ENCODE measurements at regions of chr12 and their contacts with region 1.

Region 1: GRCh38 chr12:31274520-31275300 is 51.2 kb downstream of the SINHCAF start:
- DNase-seq: no peak
- H3K4me3 ChIP-seq: no peak overlapping the region
- H3K27ac ChIP-seq: no peak overlapping the region
- H3K4me1 ChIP-seq: peaks cover 0 to 20% (median 10%) of the 10 kb centered on the region in 4 donors
- H3K27me3 ChIP-seq: no peaks in the 10 kb centered on the region
- CTCF ChIP-seq: no peak
- EP300 ChIP-seq: no peak
- POLR2A ChIP-seq: no peak

Region 2: DNA sequence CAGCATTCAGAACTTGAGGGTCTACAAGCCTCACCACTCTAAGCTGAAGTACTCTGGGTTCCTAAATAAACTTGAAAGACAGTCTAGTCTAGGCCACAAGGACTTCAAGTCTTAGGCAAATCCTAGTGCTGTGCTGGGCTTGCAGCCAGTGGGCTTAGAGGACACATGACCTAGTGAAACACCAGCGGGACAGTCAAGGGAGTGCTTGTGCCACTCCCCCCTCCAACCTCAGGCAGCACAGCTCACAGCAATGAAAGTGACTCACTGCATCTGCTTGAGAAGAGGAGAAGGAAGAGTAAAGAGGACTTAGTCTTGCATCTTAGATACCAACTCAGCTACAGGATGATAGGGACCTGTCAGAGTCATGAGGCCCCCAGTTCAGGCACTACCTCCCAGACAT is 1017.1 kb before region 1 on chr12:
- intact Hi-C with region 1: no loop called
- DNase-seq: no peak
- H3K4me3 ChIP-seq: no peak overlapping the region
- H3K27ac ChIP-seq: no peak overlapping the region
- H3K4me1 ChIP-seq: no peaks in the 10 kb centered on the region
- H3K27me3 ChIP-seq: no peaks in the 10 kb centered on the region
- CTCF ChIP-seq: no peak
- EP300 ChIP-seq: no peak
- POLR2A ChIP-seq: no peak

Region 3: GRCh38 chr12:30847259-30847658 is 427.5 kb before region 1 on chr12:
- intact Hi-C with region 1: loop called (anchors 2 kb)
- DNase-seq: no peak
- H3K4me3 ChIP-seq: no peak overlapping the region
- H3K27ac ChIP-seq: no peak overlapping the region
- H3K4me1 ChIP-seq: no peaks in the 10 kb centered on the region
- H3K27me3 ChIP-seq: no peaks in the 10 kb centered on the region
- CTCF ChIP-seq: peak in 3 of 4 experiments; percentile 51 to 60 (median 51)
- EP300 ChIP-seq: no peak
- POLR2A ChIP-seq: no peak

Region 4: DNA sequence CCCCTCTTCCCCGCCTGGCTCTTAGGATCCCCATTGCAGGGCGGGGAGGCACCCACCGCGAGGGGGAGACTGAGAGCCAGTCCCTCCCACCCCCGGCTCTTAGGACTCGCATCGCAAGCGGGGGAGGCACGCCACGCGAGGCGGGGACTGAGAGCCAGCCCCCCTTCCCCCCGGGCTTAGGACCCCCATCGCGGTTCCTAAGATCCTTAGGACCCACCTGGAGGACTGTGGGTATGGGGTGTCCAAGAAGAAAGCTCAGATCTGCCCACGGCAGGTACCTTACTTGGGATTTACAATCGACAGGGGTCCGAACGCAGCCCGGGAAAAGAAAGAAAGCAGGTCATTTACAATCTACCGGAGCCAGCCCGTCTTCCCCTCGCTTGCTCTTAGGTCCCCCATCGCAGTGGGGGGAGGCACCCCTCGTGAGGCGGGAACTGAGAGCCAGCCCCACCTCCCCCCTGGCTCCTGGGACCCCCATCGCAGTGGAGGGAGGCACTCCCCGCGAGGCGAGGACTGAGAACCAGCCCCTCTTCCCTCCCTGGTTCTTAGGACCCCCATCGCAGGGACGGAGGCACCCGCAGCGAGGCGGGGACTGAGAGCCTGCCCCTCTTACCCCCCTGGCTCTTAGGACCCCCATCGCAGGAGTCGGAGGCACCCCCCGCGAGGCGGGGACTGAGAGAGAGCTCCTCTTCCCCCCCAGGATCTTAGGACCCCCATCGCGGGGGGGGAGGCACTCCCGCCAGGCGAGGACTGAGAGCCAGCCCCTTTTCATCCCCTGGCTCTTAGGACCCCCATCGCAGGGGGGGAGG is 157.3 kb before region 1 on chr12:
- intact Hi-C with region 1: loop called (anchors 10 kb)
- DNase-seq: no peak
- H3K4me3 ChIP-seq: peak overlapping the region; percentile 29 to 45 (median 35)
- H3K27ac ChIP-seq: no peak overlapping the region
- H3K4me1 ChIP-seq: peaks cover 0 to 38% (median 31%) of the 10 kb centered on the region in 4 donors
- H3K27me3 ChIP-seq: peaks cover 0 to 45% (median 16%) of the 10 kb centered on the region in 3 donors
- CTCF ChIP-seq: peak in 3 of 4 experiments; percentile 30 to 76 (median 38)
- EP300 ChIP-seq: no peak
- POLR2A ChIP-seq: no peak

Region 5: DNA sequence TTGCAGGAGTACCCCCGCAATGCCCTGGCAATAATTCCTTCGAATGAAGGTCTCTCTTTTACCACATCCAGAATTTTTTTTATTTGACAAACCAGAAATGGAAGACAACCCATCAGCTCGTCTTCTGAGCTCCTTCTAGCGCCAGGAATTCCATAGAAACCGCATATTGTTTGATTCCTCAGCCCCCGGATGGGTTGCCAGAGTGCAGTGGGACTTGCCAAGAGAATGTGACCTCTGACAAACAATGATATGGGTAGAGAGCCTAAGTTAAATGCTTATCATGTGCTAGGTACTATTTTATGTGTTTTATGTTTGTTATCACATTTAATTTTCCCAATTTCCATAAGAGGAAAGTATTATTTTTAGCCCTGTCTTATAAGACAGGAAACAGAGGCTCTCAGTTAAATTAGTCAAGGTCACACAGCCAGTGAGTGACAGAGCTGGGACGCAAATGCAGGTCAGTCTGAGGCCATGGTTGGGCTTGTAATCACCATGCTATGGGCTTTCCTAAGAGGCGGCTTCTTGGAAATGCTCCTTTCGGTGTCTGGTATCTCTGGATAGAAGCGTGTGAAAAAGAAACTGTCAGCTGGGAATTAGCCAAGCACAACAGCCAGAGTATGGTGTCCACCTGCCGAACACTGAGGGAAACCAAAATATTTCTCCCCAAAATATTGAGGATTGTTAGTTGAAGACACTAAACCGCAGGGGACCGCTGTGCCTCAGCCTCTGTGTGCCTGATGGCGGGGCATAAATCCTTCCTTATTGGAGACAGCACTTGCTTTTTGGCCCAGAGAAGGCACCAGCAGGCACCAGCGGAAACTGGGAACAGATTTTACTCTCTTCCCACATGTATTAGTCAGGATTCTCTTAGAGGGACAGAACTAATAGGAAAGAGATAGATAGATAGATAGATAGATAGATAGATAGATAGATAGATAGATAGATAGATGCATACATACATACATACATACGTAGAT is 355.3 kb after region 1 on chr12:
- intact Hi-C with region 1: loop called (anchors 10 kb)
- DNase-seq: no peak
- H3K4me3 ChIP-seq: peak overlapping the region in 2 of 4 donors; percentile 20 to 25
- H3K27ac ChIP-seq: peak overlapping the region in 3 of 4 donors; percentile 9 to 50 (median 22)
- H3K4me1 ChIP-seq: peaks cover 0 to 18% (median 14%) of the 10 kb centered on the region in 4 donors
- H3K27me3 ChIP-seq: no peaks in the 10 kb centered on the region
- CTCF ChIP-seq: no peak
- EP300 ChIP-seq: peak in 1 of 4 donors; percentile 21
- POLR2A ChIP-seq: no peak